Esophagus muscularis mucosa (tissue), 4 donors: ENCODE measurements at regions of chr2 and their contacts with region 1.

Region 1: GRCh38 chr2:199471443-199472057 is 13.8 kb upstream of the SATB2 start:
- DNase-seq: no peak
- H3K4me3 ChIP-seq: peak overlapping the region in 3 of 4 donors; percentile 19 to 38 (median 22)
- H3K27ac ChIP-seq: no peak overlapping the region
- H3K4me1 ChIP-seq: peaks cover 31 to 41% (median 33%) of the 10 kb centered on the region in 4 donors
- H3K27me3 ChIP-seq: peaks cover 0 to 93% (median 60%) of the 10 kb centered on the region in 4 donors
- CTCF ChIP-seq: peak; percentile 37 to 78 (median 54)
- EP300 ChIP-seq: no peak
- POLR2A ChIP-seq: no peak

Region 2: DNA sequence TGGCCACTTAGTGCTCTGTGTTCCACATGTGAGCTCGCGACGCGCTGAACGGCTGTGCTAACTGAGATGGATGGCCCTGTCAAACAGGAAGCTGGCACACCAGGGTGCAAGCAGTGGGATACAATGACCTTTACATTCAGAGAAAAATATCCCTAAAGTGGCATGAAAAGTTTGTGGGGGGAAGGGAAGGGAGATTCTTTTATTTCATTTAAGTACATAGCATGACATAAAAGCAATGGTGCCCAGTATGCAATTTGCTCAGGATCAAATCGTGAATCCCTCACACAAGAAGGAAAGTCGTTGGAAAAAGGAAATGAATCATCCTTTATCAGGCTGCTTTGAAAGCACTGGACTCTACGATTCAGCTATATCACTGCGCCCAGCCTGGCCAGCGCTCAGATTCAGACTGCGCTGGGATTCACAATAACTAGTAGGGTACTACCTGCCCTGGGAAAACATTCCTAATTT is 39.8 kb before region 1 on chr2:
- intact Hi-C with region 1: loop called (anchors 5 kb)
- DNase-seq: no peak
- H3K4me3 ChIP-seq: no peak overlapping the region
- H3K27ac ChIP-seq: no peak overlapping the region
- H3K4me1 ChIP-seq: no peaks in the 10 kb centered on the region
- H3K27me3 ChIP-seq: no peaks in the 10 kb centered on the region
- CTCF ChIP-seq: no peak
- EP300 ChIP-seq: no peak
- POLR2A ChIP-seq: no peak